ENCODE measurements at regions of chrX and their contacts with region 1.

Region 1: DNA sequence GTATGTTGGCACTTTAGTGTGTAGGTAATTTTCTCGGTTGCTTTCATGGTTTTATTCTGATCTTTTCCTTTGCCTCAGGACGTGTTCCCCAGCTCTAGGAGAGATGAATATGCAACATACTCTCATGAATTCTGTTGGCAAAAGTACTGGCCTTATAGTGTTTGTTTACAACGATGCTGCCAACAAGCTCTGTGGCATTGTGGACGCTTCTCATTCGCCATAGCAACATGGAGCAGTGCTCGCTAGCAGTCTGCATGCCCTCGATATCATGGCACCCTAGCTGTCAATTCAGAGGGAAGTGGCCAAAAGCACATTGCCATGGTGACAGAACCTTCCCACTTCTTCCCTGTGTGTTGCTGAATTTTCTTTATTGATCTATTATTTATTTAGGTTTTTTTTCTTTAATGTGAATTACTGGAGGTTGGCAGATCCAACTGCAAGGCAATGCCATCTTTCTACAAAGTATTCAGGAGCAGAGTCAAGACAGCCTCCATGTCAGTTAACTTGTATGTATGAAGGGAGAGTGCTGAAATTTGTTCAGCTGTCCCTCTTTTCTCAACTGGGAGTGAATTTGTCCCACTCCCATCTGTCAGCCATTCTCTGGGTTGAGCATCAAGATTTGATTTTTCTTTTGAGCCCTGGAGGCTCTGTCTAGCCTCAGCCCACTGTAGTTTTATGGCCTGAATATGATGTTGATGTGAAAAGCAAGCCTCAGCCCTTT is 224.9 kb upstream of the VCX3A start:
- DNase-seq: no peak
- ATAC-seq: no peak
- H3K4me3 ChIP-seq: no peak overlapping the region
- H3K4me3 Mint-ChIP-seq: no peak overlapping the region
- H3K27ac ChIP-seq: no peak overlapping the region
- H3K27ac Mint-ChIP-seq: no peak overlapping the region
- H3K4me1 ChIP-seq: no peaks in the 10 kb centered on the region
- H3K4me1 Mint-ChIP-seq: no peaks in the 10 kb centered on the region
- H3K27me3 ChIP-seq: no peaks in the 10 kb centered on the region
- H3K27me3 Mint-ChIP-seq: peaks cover 5% of the 10 kb centered on the region
- CTCF ChIP-seq: no peak

Region 2: DNA sequence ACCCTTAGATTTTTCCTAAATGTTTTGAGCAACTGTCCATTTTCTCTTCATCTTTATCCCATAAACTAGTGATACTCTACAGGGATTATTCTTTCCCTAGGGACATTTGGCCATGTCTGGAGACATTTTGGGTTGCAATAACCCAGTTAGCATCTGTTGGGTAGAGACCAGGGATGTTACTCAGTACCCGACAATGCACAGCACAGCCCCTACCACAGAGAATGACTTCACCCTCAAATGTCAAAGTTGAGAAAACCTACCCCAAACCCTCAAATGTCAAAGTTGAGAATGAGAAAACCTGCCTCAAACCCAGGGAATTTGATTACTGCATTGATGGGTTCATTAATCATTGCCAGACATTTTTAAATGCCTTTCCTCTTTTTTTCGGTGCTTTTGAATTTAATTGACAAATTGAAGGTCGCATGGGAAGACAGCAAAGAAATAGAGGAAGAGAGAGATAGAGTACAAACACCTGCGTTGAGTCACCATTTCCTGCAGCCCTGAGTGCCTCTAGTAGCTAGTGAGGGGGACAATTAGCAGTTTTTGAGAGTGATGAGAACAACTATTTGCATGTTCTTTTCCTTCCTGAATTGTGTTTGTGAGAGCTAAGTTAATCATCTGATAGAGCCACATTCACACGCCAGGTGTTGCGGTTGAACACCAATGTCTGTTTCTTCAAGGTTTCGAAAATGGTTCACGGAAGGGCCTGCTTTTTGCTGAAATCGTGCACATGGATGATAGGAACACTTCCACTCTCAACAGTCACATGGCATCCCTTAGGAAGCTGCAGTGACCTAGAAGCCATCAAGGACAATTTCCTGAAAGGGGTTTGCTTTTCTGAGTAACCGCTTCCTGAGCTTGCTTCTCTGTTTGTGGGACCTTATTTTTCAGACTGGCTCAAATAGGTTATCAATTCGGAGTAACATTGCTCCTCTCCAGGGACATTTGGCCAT is 21.0 kb before region 1 on chrX:
- CTCF ChIA-PET with region 1: no interaction called
- POLR2A ChIA-PET with region 1: no interaction called
- intact Hi-C with region 1: loop called in 1 of 2 experiments (anchors 2 kb)
- DNase-seq: peak in 1 of 9 experiments; percentile 7
- ATAC-seq: no peak
- H3K4me3 ChIP-seq: no peak overlapping the region
- H3K4me3 Mint-ChIP-seq: no peak overlapping the region
- H3K27ac ChIP-seq: no peak overlapping the region
- H3K27ac Mint-ChIP-seq: no peak overlapping the region
- H3K4me1 ChIP-seq: no peaks in the 10 kb centered on the region
- H3K4me1 Mint-ChIP-seq: no peaks in the 10 kb centered on the region
- H3K27me3 ChIP-seq: no peaks in the 10 kb centered on the region
- H3K27me3 Mint-ChIP-seq: no peaks in the 10 kb centered on the region
- CTCF ChIP-seq: no peak

Region 3: DNA sequence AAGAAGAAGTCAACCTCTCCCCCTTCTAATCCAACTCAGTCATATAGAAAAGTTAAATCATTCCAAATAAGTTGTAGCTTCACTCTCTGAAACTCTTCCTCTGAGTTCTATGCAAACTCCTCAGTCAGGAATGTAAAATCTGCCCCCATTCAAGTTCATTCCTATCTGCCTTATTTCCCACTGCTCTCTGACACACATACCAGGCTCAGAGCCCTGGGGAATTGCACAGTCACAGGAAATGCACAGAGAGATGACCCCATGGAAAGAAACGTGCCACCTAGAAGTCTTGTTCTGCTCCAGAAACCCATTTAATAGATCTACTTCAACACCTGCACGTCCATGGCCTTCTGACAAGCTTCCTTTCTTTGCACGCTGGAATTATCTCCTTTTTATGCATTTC is 11.1 kb after region 1 on chrX:
- CTCF ChIA-PET with region 1: no interaction called
- POLR2A ChIA-PET with region 1: no interaction called
- intact Hi-C with region 1: no loop called
- DNase-seq: no peak
- ATAC-seq: no peak
- H3K4me3 ChIP-seq: no peak overlapping the region
- H3K4me3 Mint-ChIP-seq: no peak overlapping the region
- H3K27ac ChIP-seq: no peak overlapping the region
- H3K27ac Mint-ChIP-seq: no peak overlapping the region
- H3K4me1 ChIP-seq: no peaks in the 10 kb centered on the region
- H3K4me1 Mint-ChIP-seq: no peaks in the 10 kb centered on the region
- H3K27me3 ChIP-seq: no peaks in the 10 kb centered on the region
- H3K27me3 Mint-ChIP-seq: no peaks in the 10 kb centered on the region
- CTCF ChIP-seq: no peak